ENCODE measurements at regions of chr13 and their contacts with region 1.

Region 1: DNA sequence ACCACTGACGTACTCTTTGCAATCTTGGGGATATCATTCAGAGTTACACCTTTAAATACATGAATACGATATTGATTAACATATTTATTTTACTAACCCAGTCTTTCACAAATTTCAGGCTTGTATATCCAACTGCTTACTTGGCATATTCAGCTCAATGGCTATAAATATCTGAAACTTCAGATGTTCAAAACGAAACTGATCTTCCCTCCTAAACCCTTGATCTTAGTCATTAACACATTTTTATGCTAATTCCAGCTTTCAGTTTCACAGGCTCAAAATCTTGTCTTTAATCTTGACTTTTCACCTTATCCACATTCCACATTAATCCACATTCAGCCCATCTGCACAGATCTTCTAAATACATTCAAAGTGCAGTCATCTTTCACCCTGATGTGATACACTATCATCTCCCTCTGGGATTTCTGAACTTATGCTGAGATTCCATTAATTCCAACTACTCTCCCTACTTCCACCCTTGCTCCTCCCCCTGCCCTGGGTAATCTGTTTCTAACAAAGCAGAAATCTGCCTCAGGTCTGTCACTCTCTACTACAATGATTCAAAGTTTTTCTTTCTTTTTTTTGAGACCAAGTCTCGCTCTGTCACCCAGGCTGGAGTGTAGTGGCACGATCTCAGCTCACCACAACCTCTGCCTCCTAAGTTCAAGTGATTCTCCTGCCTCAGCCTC is 387.2 kb downstream of the GPC5 start:
- DNase-seq: no peak
- H3K4me3 ChIP-seq: no peak overlapping the region
- H3K27ac ChIP-seq: no peak overlapping the region
- H3K27me3 ChIP-seq: no peaks in the 10 kb centered on the region
- CTCF ChIP-seq: no peak

Region 2: GRCh38 chr13:91375116-91375729 is 410.4 kb before region 1 on chr13:
- CTCF ChIA-PET with region 1: interaction called, 30 read pairs
- POLR2A ChIA-PET with region 1: no interaction called
- DNase-seq: no peak
- H3K4me3 ChIP-seq: no peak overlapping the region
- H3K27ac ChIP-seq: no peak overlapping the region
- H3K27me3 ChIP-seq: no peaks in the 10 kb centered on the region
- CTCF ChIP-seq: peak; percentile 69

Measured in AG04450 (cell line).